ENCODE measurements at regions of chrX and their contacts with region 1.

Region 1: DNA sequence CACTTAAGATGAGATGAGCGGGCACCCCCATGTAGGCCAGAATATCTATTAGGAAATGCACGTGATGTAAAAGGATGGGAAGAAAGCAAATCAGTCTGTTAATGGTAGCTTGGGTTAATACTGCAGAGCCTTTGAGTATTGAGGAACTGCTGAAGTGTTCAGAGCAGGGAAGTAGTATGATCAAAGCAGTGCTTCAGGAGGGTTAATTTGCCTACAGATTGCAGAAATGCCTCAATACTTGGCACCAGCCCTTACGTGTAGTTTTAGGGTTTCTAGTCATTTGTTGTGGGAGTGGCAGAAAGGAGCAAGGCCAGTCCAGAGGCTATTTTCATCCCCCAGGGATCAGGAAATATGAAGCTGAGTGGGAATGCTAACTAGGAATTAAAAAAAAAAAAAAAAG is 19.7 kb downstream of the ZFX start:
- H3K4me3 Mint-ChIP-seq: no peak overlapping the region
- H3K27ac Mint-ChIP-seq: peak overlapping the region; percentile 57
- H3K4me1 Mint-ChIP-seq: peaks cover 38% of the 10 kb centered on the region
- H3K27me3 Mint-ChIP-seq: no peaks in the 10 kb centered on the region

Region 2: DNA sequence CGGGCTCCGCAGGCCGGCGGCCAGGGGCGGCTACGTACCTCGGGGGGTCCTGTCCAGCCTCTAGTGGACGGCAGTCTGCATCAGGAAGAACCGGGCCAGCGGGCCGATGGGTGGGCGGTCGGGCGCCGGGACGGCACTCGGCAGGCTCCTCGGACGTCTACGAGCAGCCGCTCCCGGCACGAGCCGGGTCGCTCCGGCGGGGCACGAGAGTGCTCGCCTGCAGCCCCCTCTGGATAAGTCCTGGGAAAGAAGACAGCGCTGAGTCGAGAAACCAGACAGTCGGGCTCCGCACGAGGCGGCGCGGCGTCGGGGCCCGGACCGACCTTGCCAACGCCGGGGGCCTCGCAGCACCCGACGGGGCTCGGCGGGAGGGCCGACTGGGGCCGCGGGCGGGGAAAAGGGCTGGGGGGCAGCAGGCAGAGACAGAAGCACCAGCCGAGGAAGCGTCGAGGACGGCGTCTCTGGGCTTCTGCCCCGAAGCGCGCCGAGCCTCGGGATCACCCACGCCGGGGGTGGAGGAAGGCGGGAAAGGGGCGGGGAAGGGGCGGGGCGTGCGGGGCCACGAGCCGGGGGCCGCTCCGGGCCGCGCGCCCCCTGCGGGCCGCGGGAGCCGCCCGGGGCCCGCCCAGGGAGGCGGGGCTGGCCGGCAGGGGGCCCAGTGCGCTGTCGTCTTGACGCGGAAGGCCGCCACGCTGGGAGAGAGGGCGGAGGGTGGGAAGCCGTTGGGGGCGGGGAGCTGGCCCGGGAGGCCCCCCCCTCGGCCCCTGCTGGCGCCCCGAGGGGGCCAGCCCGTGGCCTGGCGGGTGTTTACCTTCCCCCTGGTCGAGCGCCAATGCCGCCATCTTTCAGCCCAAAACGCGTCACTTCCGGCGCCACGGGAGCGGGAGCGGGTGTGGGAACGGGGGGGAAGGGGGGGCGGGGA is 144.1 kb before region 1 on chrX:
- intact Hi-C with region 1: no loop called
- H3K4me3 Mint-ChIP-seq: peak overlapping the region; percentile 74
- H3K27ac Mint-ChIP-seq: peak overlapping the region; percentile 83
- H3K4me1 Mint-ChIP-seq: peaks cover 8% of the 10 kb centered on the region
- H3K27me3 Mint-ChIP-seq: peaks cover 2% of the 10 kb centered on the region

Region 3: GRCh38 chrX:24081661-24082264 is 87.4 kb before region 1 on chrX:
- intact Hi-C with region 1: loop called (anchors 10 kb)
- H3K4me3 Mint-ChIP-seq: no peak overlapping the region
- H3K27ac Mint-ChIP-seq: no peak overlapping the region
- H3K4me1 Mint-ChIP-seq: no peaks in the 10 kb centered on the region
- H3K27me3 Mint-ChIP-seq: no peaks in the 10 kb centered on the region

Region 4: GRCh38 chrX:24506055-24506454 is 336.8 kb after region 1 on chrX:
- intact Hi-C with region 1: no loop called
- H3K4me3 Mint-ChIP-seq: no peak overlapping the region
- H3K27ac Mint-ChIP-seq: no peak overlapping the region
- H3K4me1 Mint-ChIP-seq: no peaks in the 10 kb centered on the region
- H3K27me3 Mint-ChIP-seq: no peaks in the 10 kb centered on the region